WTC11 (cell line): ENCODE measurements at regions of chr1 and their contacts with region 1.

Region 1: DNA sequence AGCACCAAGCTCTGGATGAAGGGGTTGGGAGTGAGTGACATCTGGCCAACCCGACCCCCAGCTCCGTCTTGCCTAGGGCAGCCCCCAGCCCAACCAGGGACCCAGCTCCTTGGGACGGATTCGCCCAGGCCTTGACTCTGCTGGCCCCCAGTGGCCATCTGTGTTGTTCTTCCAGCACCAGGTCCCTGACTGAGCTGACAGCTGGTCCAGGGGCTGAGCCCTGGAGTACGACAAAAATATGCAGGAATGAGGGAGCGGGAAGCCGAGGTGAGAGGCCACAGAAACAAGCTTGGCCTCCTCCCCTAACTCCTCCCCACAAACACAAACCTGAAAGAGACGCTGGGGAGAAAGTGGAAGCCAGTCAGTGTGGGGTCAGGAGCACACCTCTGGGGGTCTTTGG is 55.0 kb upstream of the PAX7 start:
- DNase-seq: peak; percentile 94
- ATAC-seq: peak; percentile 95
- H3K4me3 Mint-ChIP-seq: no peak overlapping the region
- H3K27ac Mint-ChIP-seq: no peak overlapping the region
- H3K4me1 Mint-ChIP-seq: peaks cover 9% of the 10 kb centered on the region
- H3K27me3 Mint-ChIP-seq: peaks cover 2% of the 10 kb centered on the region; the same call in 1 of the 2 replicates
- CTCF ChIP-seq: peak; percentile 77

Region 2: GRCh38 chr1:18290740-18291412 is 284.7 kb before region 1 on chr1:
- CTCF ChIA-PET with region 1: interaction called, 12 read pairs
- POLR2A ChIA-PET with region 1: no interaction called
- DNase-seq: peak; percentile 30
- ATAC-seq: peak; percentile 24
- H3K4me3 Mint-ChIP-seq: no peak overlapping the region
- H3K27ac Mint-ChIP-seq: peak overlapping the region; percentile 93
- H3K4me1 Mint-ChIP-seq: peaks cover 88% of the 10 kb centered on the region
- H3K27me3 Mint-ChIP-seq: no peaks in the 10 kb centered on the region; the same call in 1 of the 2 replicates
- CTCF ChIP-seq: no peak

Region 3: GRCh38 chr1:18373882-18374493 is 201.6 kb before region 1 on chr1:
- CTCF ChIA-PET with region 1: interaction called, 18 read pairs
- POLR2A ChIA-PET with region 1: no interaction called
- DNase-seq: peak; percentile 93
- ATAC-seq: peak; percentile 95
- H3K4me3 Mint-ChIP-seq: no peak overlapping the region
- H3K27ac Mint-ChIP-seq: no peak overlapping the region
- H3K4me1 Mint-ChIP-seq: peaks cover 13% of the 10 kb centered on the region
- H3K27me3 Mint-ChIP-seq: peaks cover 16% of the 10 kb centered on the region
- CTCF ChIP-seq: peak; percentile 77

Region 4: DNA sequence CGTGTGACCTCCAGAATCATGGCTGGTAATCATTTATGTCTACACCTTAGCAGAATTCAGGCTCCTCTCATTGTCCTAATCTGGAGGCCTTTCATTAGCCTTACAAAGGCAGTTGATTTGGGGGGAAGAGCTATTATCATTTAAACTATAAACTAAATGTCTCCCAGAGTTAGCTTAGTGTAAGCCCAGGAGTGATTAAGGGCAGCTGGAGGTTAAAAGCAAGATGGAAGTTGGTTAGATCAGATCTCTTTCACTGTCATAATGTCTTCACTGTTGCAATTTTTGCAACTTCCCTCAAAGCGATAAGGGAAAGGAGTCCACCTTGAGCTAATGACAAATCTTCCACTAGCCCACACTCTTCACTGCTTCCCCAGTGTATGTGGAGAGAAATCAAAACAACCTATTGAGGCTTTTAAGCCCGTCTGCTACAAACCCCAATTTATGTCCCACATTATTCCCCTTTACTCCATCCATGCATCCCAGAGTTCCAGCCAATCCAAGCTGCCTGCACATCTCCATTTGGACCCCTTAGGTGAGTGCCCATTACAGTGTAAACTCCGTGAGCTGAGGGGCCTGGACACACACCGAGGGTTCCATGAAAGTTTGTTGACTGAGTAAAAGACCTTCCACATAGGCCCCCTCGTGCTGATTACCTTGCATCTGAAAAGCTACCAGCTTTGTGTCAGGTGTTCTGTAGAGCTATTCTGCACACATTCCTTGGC is 156.3 kb before region 1 on chr1:
- CTCF ChIA-PET with region 1: interaction called, 14 read pairs
- POLR2A ChIA-PET with region 1: no interaction called
- DNase-seq: no peak
- ATAC-seq: peak; percentile 71
- H3K4me3 Mint-ChIP-seq: peak overlapping the region; percentile 14
- H3K27ac Mint-ChIP-seq: peak overlapping the region; percentile 98
- H3K4me1 Mint-ChIP-seq: peaks cover 76% of the 10 kb centered on the region
- H3K27me3 Mint-ChIP-seq: no peaks in the 10 kb centered on the region
- CTCF ChIP-seq: no peak

Region 5: DNA sequence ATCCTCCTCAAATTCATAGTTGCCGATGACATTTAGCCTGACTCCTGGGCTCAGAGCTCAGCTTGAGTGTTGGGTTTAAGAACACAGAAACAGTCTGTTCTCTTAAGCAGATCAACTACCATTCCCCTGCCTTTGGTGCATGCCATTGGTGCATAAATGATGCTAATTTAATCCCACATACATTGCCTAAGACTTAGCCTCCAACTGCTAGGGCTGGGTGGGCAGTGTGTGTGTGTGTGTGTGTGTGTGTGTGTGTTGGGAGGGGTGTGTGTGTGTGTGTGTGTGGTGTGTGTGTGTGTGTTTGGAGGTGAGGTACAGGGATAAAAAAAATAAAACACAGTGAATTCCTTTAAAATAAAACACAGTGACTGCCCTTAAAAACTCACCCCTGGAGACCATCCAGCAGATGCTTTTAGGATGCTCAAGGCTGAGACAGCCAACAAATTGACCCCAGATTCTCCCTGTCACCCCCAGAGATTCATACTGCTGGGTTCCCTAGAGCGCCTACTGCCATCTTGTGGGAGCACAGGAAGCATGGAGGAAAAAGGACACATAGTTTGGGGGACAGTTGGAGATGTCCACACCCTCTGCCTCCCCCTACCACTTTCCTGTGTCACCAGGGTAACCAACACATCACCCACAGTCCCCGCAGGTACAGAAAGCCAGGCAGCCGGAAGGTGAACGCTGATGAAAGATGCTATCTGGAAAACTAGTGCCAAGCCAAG is 64.3 kb before region 1 on chr1:
- CTCF ChIA-PET with region 1: interaction called, 10 read pairs
- POLR2A ChIA-PET with region 1: no interaction called
- DNase-seq: peak; percentile 33
- ATAC-seq: peak; percentile 66
- H3K4me3 Mint-ChIP-seq: no peak overlapping the region
- H3K27ac Mint-ChIP-seq: no peak overlapping the region
- H3K4me1 Mint-ChIP-seq: peaks cover 9% of the 10 kb centered on the region
- H3K27me3 Mint-ChIP-seq: peaks cover 20% of the 10 kb centered on the region
- CTCF ChIP-seq: no peak

Region 6: DNA sequence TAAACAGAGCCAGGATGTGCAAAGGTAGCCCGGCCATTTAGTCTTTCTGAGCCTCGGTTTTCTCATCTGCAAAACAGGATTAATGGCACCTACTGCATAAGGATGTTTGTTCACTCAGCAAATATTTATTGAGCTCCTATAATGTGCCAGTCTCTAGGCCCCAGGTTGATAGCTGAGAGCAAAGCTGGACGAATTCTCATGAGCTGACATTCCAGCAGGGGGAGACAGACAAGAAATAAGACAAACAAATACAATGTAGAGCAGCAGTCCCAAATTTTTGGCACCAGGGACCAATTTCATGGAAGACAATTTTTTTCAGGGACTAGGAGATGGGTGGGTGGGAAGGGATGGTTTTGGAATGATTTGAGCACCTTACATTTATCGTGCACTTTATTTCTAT is 19.3 kb before region 1 on chr1:
- CTCF ChIA-PET with region 1: interaction called, 340 read pairs
- POLR2A ChIA-PET with region 1: no interaction called
- DNase-seq: no peak
- ATAC-seq: no peak
- H3K4me3 Mint-ChIP-seq: no peak overlapping the region
- H3K27ac Mint-ChIP-seq: no peak overlapping the region
- H3K4me1 Mint-ChIP-seq: peaks cover 38% of the 10 kb centered on the region
- H3K27me3 Mint-ChIP-seq: peaks cover 30% of the 10 kb centered on the region
- CTCF ChIP-seq: no peak

Region 7: DNA sequence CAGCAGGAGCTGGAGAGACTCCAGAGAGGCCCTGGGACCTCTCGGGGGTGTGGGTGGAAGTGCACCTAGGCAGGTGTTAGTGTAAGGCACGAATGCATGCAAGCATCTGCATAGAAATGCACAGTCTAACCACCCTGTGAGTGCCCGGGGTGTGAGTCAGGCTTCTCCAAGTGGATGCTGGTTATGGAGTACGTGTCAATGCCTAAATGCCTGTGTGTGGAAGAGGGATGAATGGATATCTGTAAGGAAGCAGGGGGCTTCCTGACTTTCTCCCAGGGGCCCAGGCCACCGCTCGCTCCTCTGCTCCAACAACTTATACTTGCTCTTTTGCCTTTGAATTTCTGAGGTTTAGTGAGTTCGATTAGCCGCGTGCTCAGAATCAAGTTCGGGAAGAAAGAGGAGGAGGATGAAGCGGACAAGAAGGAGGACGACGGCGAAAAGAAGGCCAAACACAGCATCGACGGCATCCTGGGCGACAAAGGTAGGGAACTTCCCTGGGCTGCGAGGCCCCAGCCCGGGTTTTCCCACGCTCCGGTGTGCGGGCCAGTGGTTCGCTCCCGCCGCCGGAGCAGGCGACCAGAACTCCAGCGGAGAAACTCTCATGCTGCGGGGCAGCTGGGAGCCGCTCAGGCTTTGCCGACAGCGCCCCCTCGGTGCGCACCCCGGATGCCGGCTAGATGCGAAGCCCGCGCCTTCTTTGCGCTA is 60.4 kb after region 1 on chr1:
- CTCF ChIA-PET with region 1: no interaction called
- POLR2A ChIA-PET with region 1: no interaction called
- DNase-seq: peak; percentile 62
- ATAC-seq: no peak
- H3K4me3 Mint-ChIP-seq: peak overlapping the region; percentile 59
- H3K27ac Mint-ChIP-seq: no peak overlapping the region
- H3K4me1 Mint-ChIP-seq: peaks cover 81% of the 10 kb centered on the region
- H3K27me3 Mint-ChIP-seq: peaks cover 100% of the 10 kb centered on the region
- CTCF ChIP-seq: no peak